Tibial artery (tissue), 4 donors: ENCODE measurements at regions of chr3 and their contacts with region 1.

Region 1: DNA sequence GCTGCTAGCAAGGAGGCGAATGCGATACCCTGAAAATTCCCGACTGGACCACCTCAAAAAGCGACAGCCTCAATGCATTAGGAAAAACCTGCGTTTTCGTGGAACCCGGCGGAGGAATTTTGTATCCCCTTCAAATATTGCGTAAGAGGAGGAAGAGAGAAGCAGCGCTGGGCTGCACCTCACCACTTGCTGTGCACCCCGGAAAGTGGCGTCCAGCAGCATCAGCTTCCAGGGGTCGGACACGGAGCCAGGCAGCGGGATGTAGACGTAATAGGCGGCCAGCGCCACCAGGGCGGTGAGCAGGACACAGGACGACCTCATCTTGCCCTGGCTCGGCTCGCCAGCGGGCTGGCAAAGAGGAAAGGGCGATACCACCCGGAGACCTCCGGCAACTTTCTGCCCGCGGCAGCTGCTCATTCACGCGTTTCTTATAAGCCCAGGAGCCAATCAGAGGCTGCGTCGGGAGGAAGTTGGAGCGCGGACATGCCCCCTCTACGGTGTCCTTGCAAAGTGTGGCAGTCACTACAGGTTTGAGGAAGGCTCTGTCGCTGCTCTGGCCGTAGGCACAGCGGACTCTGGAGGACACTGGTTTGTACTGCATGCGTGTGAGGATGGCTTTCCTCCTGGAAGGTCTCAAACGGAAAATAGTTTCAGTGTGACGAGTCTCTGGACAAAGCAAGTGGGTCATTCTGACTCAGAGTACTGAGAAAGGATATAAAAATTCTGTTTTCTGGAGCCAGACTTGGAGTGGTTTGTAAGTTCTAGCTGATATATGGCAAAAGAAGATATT is at the start of gene NCEH1:
- DNase-seq: peak; percentile 93 to 95
- H3K4me3 ChIP-seq: peak within 1 kb of the TSS; percentile 91 to 96
- H3K27ac ChIP-seq: peak within 1 kb of the TSS; percentile 87 to 91
- H3K4me1 ChIP-seq: peaks cover 0 to 31% (median 14%) of the 10 kb centered on the region in 4 donors
- H3K27me3 ChIP-seq: no peaks in the 10 kb centered on the region
- CTCF ChIP-seq: peak; percentile 81 to 83

Region 2: GRCh38 chr3:172675441-172676193 is 35.2 kb before region 1 on chr3:
- intact Hi-C with region 1: loop called (anchors 5 kb)
- DNase-seq: no peak
- H3K4me3 ChIP-seq: no peak overlapping the region
- H3K27ac ChIP-seq: no peak overlapping the region
- H3K4me1 ChIP-seq: peaks cover 0 to 24% (median 14%) of the 10 kb centered on the region in 4 donors
- H3K27me3 ChIP-seq: no peaks in the 10 kb centered on the region
- CTCF ChIP-seq: peak; percentile 70 to 71

Region 3: GRCh38 chr3:173411375-173411973 is 700.6 kb after region 1 on chr3:
- intact Hi-C with region 1: no loop called
- DNase-seq: no peak
- H3K4me3 ChIP-seq: peak overlapping the region in 1 of 2 donors; percentile 7
- H3K27ac ChIP-seq: no peak overlapping the region
- H3K4me1 ChIP-seq: peaks cover 0 to 9% (median 4%) of the 10 kb centered on the region in 4 donors
- H3K27me3 ChIP-seq: no peaks in the 10 kb centered on the region
- CTCF ChIP-seq: peak; percentile 41 to 48

Region 4: GRCh38 chr3:174110761-174111160 is 1399.9 kb after region 1 on chr3:
- intact Hi-C with region 1: no loop called
- DNase-seq: no peak
- H3K4me3 ChIP-seq: no peak overlapping the region
- H3K27ac ChIP-seq: no peak overlapping the region
- H3K4me1 ChIP-seq: no peaks in the 10 kb centered on the region
- H3K27me3 ChIP-seq: no peaks in the 10 kb centered on the region
- CTCF ChIP-seq: no peak